Right ventricle myocardium inferior (tissue), 1 donor: ENCODE measurements at regions of chr14 and their contacts with region 1.

Region 1: DNA sequence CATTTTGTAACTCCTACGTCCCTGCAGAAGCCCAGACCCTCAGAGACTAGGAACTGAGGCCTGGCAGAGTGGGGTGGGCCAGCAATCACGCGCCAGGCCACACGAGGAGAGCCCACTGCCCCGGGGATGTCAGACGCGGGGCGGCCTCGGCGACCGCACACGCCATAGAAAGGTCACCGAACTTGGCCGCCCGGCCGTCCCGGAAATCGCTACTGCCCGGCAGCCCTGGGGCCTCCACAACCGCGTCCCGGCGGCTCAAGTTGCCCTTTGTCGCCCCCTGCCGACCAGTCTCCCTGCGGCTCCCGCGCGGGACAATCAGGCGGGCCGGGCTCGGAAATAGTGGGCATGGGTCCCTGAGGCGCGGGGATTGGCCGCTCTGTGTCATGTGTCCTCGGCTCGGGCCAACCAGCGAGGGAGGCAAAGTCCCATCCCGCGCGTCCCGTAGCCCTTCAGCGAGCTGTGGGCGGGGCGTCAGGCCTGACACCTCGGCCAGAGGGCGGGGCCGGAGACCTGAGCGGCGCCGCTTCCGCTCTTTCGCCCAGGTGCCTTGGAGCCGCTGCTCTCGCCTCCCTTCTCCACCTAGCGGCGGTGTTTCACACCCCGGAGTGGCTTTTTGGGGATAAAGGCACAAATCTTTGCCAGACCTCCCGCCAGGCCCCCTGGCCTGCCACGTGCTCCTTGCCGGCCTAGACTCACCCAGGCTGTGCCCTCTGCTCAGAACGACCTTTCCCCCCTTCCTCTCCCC is 33.4 kb upstream of the DEGS2 start:
- DNase-seq: peak; percentile 100
- ATAC-seq: peak; percentile 99

Region 2: DNA sequence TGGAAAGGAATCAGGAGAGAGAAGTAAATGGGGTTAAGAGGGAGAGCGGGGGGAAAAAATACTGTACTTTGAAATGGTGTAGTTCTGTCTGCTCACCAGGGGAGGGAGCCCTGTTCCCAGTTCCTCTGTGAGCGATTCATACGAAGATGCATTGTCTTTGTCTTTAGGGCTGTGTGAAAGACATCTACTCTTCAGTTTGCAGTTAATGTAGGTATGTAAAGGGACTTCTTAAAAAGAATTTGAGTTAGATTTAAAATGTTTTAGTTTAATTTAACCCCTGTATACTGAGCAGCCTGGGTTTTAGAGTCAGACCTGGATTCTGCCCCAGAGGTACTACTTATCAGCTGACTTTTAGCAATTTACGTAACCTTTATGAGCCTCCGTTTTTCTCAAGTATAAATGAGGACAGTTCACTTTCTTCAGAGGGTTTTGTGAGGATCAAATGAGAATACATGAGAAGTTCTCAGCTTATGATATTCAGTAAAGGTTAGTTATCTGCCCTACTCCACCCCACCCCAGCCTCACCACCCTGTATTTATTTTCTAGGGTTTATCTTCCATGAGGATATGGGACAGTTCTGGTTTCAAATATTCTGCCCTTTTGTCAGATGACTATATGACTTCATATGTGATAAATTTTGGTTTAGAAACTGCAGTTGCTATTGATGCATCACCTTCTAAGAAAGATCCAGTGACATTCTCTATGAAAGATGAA is 210.2 kb before region 1 on chr14:
- intact Hi-C with region 1: loop called (anchors 2 kb)
- DNase-seq: no peak
- ATAC-seq: peak; percentile 91

Region 3: DNA sequence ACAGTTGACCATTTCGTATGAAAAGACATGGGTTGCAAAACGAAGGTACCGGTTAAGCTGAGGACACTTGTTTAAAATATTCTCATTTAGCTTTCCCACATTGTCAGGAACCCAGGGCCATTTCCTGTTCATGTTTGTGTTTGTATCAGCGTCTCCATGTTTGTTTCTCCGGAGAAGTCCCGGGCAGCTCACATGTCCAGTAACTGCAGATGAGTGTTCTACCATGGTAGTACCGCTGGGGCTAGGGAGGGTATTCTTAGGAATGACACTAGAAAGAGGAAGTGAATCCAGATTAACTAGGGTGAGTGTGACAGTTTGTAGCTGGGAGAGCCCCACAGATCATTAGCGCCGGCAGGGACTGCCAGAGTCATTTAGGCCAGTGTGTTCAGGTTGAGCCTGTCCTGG is 177.6 kb before region 1 on chr14:
- intact Hi-C with region 1: no loop called
- DNase-seq: no peak
- ATAC-seq: no peak

Region 4: GRCh38 chr14:100056964-100057795 is 135.7 kb before region 1 on chr14:
- intact Hi-C with region 1: loop called (anchors 5 kb)
- DNase-seq: no peak
- ATAC-seq: peak; percentile 73

Region 5: GRCh38 chr14:100108042-100108825 is 84.6 kb before region 1 on chr14:
- intact Hi-C with region 1: loop called (anchors 2 kb)
- DNase-seq: peak; percentile 92
- ATAC-seq: peak; percentile 82

Region 6: GRCh38 chr14:100239840-100240724 is 47.2 kb after region 1 on chr14:
- intact Hi-C with region 1: loop called (anchors 2 kb)
- DNase-seq: peak; percentile 93
- ATAC-seq: peak; percentile 70

Region 7: DNA sequence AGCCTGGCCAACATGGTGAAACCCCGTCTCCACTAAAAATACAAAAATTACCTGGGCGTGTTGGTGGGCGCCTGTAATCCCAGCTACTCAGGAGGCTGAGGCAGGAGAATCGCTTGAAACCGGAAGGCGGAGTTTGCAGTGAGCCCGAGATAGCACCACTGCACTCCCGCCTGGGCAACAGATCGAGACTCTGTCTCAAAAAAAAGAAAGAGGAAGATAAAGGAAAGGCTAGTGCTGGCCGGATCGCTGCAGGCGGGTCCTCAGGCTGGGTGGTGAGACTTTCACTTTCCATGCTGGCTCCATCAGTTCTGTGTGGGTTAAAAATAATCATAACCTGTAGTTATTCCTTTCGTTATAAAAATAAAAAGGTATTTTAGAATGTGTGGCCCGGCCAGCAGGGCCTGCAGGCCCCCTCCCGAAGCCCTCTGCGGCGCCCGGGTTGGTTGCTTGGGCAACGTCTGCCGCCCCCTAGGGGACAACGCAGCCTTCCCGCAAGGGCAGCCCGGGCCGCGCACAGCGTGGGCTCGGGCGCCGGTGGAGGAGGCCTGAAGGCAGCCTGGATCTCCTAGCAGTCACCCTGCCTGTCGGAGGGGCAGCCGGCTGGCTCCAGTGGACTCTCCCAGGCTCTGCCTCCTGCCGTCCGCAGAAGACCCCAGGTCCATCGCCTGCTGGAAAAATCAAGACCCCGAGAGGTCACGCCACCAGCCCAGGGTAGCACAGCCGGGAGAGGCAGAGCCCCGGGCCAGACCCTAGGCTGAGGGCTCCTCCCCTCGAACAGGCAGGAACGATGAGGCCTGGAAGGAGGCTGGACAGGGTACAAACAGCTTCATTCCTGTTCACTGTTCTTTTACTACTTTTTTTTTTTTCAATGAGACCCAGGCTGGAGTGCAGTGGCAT is 125.3 kb after region 1 on chr14:
- intact Hi-C with region 1: no loop called
- DNase-seq: peak; percentile 91
- ATAC-seq: peak; percentile 90

Region 8: GRCh38 chr14:100547633-100548294 is 354.9 kb after region 1 on chr14:
- intact Hi-C with region 1: no loop called
- DNase-seq: peak; percentile 87
- ATAC-seq: peak; percentile 58